Ovary (tissue), 10 donors: ENCODE measurements at regions of chr4 and their contacts with region 1.

Region 1: DNA sequence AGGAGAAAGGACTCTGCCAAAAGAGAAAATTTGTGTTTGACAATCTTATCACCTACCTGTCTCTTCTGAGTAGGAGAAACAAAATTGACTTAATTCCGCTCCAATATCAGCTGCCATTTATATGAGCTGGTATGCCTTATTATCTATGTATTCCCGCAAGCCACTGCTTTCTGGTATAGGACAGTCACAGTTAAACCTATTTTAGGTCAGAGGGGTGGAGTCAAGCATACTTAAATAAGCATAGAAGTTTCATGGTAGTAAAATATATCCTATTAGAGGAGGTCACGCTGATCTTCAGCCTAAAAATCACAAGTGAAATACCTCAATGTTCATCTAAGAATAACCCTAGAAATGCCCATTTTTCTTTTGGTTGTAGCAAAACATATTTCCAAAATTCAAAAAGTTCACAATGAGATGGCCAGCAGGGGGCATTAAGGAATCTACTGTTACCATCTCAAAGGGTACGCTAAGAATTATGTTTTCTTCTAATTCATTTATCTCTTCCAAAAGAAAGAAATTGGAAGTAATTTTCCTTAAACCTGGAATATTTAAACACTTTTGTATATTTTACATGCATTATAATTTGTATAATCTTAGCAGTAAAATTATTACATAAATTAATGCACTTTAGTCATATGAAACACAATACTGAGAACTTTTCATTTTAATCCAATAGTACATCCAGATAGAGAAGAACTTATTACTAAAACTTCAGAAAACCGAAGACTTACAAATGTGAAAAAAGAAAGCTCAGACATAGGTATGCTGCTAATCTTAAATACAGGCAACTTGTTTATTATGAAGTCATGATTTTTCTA is 10.5 kb downstream of the PPAT start:
- DNase-seq: peak in 1 of 5 donors; percentile 34
- H3K4me3 ChIP-seq: no peak overlapping the region
- H3K27ac ChIP-seq: no peak overlapping the region
- H3K4me1 ChIP-seq: no peaks in the 10 kb centered on the region
- H3K27me3 ChIP-seq: no peaks in the 10 kb centered on the region
- CTCF ChIP-seq: peak; percentile 21 to 52 (median 37)
- EP300 ChIP-seq: no peak
- POLR2A ChIP-seq: no peak

Region 2: GRCh38 chr4:56530269-56531148 is 105.6 kb after region 1 on chr4:
- intact Hi-C with region 1: loop called in 1 of 4 experiments (anchors 10 kb)
- DNase-seq: peak; percentile 81 to 89 (median 83)
- H3K4me3 ChIP-seq: peak overlapping the region; percentile 61
- H3K27ac ChIP-seq: no peak overlapping the region
- H3K4me1 ChIP-seq: peaks cover 8% of the 10 kb centered on the region
- H3K27me3 ChIP-seq: no peaks in the 10 kb centered on the region
- CTCF ChIP-seq: no peak
- EP300 ChIP-seq: no peak
- POLR2A ChIP-seq: no peak

Region 3: GRCh38 chr4:56658528-56658927 is 233.6 kb after region 1 on chr4:
- intact Hi-C with region 1: no loop called
- DNase-seq: no peak
- H3K4me3 ChIP-seq: no peak overlapping the region
- H3K27ac ChIP-seq: no peak overlapping the region
- H3K4me1 ChIP-seq: peaks cover 3% of the 10 kb centered on the region
- H3K27me3 ChIP-seq: peaks cover 2% of the 10 kb centered on the region
- CTCF ChIP-seq: no peak
- EP300 ChIP-seq: no peak
- POLR2A ChIP-seq: no peak